GM12878 (cell line): ENCODE measurements at regions of chr20 and their contacts with region 1.

Region 1: DNA sequence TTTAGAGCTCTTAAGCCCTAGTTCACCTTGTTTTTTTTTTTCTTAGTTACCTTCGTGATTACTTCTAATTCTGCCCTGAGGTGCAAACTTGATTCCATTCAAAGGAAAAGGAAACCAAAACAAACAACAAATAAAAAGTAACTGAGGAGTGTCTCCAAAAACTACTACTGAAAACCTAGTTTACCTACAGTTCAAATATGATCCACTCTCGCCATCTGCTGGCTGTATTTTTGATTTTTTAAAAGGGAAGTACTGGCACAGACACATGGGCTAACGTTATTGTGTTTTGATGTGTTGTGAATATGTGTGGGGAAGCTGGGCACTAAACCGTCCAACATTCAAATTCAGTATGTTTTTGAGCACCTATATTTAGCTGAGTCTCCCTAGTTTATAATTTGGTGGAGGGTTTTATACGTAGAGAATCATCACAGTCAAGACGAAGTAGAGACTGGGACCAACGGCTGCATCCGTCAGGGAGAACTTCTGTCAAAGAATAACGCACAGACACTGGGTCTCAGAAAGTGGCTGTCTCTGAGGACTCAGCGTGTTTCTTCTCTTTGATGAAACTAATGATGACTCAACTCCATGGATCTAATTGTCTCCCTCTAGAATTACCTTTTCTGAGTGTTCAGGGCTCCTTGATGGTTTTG is 373.5 kb upstream of the BTBD3 start:
- DNase-seq: peak; percentile 40
- ATAC-seq: peak; percentile 97
- H3K4me3 ChIP-seq: no peak overlapping the region
- H3K27ac ChIP-seq: no peak overlapping the region
- H3K4me1 ChIP-seq: no peaks in the 10 kb centered on the region
- H3K27me3 ChIP-seq: no peaks in the 10 kb centered on the region
- CTCF ChIP-seq: peak; percentile 33 to 76 (median 39); a peak in 4 of 6 replicates
- EP300 ChIP-seq: no peak
- POLR2A ChIP-seq: no peak
- RAD21 ChIP-seq: peak; percentile 86

Region 2: DNA sequence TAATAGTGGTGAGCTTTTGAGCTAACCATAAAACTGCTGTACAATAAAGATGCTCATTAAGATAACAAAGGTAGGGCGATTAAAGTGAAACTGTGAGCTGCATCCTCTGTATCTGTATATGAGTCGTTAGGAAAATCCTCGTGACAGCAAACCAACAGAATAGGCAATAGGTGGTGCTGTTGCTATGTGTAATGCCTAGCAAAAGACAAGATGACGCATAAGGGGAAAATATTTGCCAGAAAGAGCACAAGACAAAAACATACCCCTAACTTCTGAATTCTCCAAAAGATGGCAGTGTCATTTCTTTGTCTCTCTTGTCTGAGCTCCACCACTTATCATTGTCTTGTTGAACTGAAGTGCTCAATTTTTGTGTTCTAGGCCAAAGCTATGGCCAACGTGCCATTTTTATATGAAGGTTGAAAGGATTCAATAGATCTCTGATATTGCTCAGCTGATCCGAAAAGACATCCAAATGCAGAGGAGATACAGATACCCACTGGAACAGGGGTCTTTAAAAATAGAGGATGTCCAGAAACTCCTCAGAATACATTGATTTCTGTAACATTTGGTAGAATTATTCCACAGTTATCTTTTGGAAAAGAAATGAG is 1565.7 kb before region 1 on chr20:
- CTCF ChIA-PET with region 1: interaction called, 6 read pairs
- POLR2A ChIA-PET with region 1: no interaction called
- RAD21 ChIA-PET with region 1: no interaction called
- SMC1A ChIA-PET with region 1: interaction called, 3 read pairs
- in situ Hi-C with region 1: loop called (anchors 25 kb)
- intact Hi-C with region 1: loop called (anchors 10 kb)
- DNase-seq: peak; percentile 41
- ATAC-seq: peak; percentile 97
- H3K4me3 ChIP-seq: no peak overlapping the region
- H3K27ac ChIP-seq: no peak overlapping the region
- H3K4me1 ChIP-seq: no peaks in the 10 kb centered on the region
- H3K27me3 ChIP-seq: no peaks in the 10 kb centered on the region; a peak in 1 of 4 replicates
- CTCF ChIP-seq: peak; percentile 61 to 94 (median 79)
- EP300 ChIP-seq: no peak
- POLR2A ChIP-seq: no peak
- RAD21 ChIP-seq: peak; percentile 96

Region 3: GRCh38 chr20:10558635-10559187 is 985.4 kb before region 1 on chr20:
- CTCF ChIA-PET with region 1: interaction called, 18 read pairs
- POLR2A ChIA-PET with region 1: no interaction called
- RAD21 ChIA-PET with region 1: interaction called, 15 read pairs
- SMC1A ChIA-PET with region 1: interaction called, 16 read pairs
- in situ Hi-C with region 1: loop called (anchors 5 kb)
- intact Hi-C with region 1: loop called (anchors 2 kb)
- DNase-seq: peak; percentile 84
- ATAC-seq: peak; percentile 98
- H3K4me3 ChIP-seq: no peak overlapping the region
- H3K27ac ChIP-seq: peak overlapping the region; percentile 59
- H3K4me1 ChIP-seq: peaks cover 11% of the 10 kb centered on the region; the same call in 1 of the 2 replicates
- H3K27me3 ChIP-seq: no peaks in the 10 kb centered on the region
- CTCF ChIP-seq: no peak
- EP300 ChIP-seq: peak; percentile 95 to 96; a peak in 3 of 4 replicates
- POLR2A ChIP-seq: no peak
- RAD21 ChIP-seq: no peak

Region 4: GRCh38 chr20:11204926-11205768 is 339.0 kb before region 1 on chr20:
- CTCF ChIA-PET with region 1: interaction called, 3 read pairs
- POLR2A ChIA-PET with region 1: no interaction called
- RAD21 ChIA-PET with region 1: interaction called, 3 read pairs
- SMC1A ChIA-PET with region 1: interaction called, 7 read pairs
- in situ Hi-C with region 1: no loop called
- intact Hi-C with region 1: loop called (anchors 1 kb)
- DNase-seq: peak; percentile 50
- ATAC-seq: peak; percentile 99
- H3K4me3 ChIP-seq: no peak overlapping the region
- H3K27ac ChIP-seq: no peak overlapping the region
- H3K4me1 ChIP-seq: no peaks in the 10 kb centered on the region
- H3K27me3 ChIP-seq: no peaks in the 10 kb centered on the region; a peak in 1 of 4 replicates
- CTCF ChIP-seq: peak; percentile 80 to 89 (median 84)
- EP300 ChIP-seq: no peak
- POLR2A ChIP-seq: no peak
- RAD21 ChIP-seq: peak; percentile 81

Region 5: GRCh38 chr20:11296951-11297350 is 247.2 kb before region 1 on chr20:
- CTCF ChIA-PET with region 1: interaction called, 10 read pairs
- POLR2A ChIA-PET with region 1: no interaction called
- RAD21 ChIA-PET with region 1: interaction called, 5 read pairs
- SMC1A ChIA-PET with region 1: interaction called, 5 read pairs
- in situ Hi-C with region 1: no loop called
- intact Hi-C with region 1: no loop called
- DNase-seq: no peak
- ATAC-seq: no peak
- H3K4me3 ChIP-seq: no peak overlapping the region
- H3K27ac ChIP-seq: no peak overlapping the region
- H3K4me1 ChIP-seq: no peaks in the 10 kb centered on the region
- H3K27me3 ChIP-seq: no peaks in the 10 kb centered on the region
- CTCF ChIP-seq: no peak
- EP300 ChIP-seq: no peak
- POLR2A ChIP-seq: no peak
- RAD21 ChIP-seq: no peak

Region 6: GRCh38 chr20:11492386-11492785 is 51.8 kb before region 1 on chr20:
- CTCF ChIA-PET with region 1: interaction called, 11 read pairs
- POLR2A ChIA-PET with region 1: no interaction called
- RAD21 ChIA-PET with region 1: no interaction called
- SMC1A ChIA-PET with region 1: interaction called, 5 read pairs
- in situ Hi-C with region 1: no loop called
- intact Hi-C with region 1: no loop called
- DNase-seq: no peak
- ATAC-seq: no peak
- H3K4me3 ChIP-seq: no peak overlapping the region
- H3K27ac ChIP-seq: no peak overlapping the region
- H3K4me1 ChIP-seq: no peaks in the 10 kb centered on the region
- H3K27me3 ChIP-seq: no peaks in the 10 kb centered on the region
- CTCF ChIP-seq: no peak
- EP300 ChIP-seq: no peak
- POLR2A ChIP-seq: no peak
- RAD21 ChIP-seq: no peak

Region 7: DNA sequence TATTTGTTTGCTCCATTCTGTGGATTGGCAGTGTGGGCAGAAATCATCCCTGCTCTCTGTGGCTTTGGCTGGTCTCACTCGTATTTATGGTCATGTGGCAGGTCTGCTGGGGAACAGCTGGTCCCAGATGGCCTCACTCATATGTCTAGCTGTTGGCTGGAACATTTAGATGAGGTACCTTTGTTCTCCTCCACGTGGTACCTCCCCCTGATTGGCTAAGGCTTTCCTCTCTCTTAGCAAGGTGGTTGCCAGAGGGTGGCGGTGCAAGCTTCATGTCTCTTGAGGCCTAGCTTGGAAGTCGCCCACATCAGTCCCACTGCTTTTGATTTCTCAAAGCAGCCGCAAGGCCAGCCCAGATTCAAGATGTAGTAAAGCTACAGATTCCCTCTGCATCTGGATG is 25.0 kb after region 1 on chr20:
- CTCF ChIA-PET with region 1: no interaction called
- POLR2A ChIA-PET with region 1: no interaction called
- RAD21 ChIA-PET with region 1: no interaction called
- SMC1A ChIA-PET with region 1: no interaction called
- in situ Hi-C with region 1: no loop called
- intact Hi-C with region 1: no loop called
- DNase-seq: no peak
- ATAC-seq: no peak; the same call in 2 of the 3 replicates
- H3K4me3 ChIP-seq: no peak overlapping the region
- H3K27ac ChIP-seq: no peak overlapping the region
- H3K4me1 ChIP-seq: no peaks in the 10 kb centered on the region
- H3K27me3 ChIP-seq: no peaks in the 10 kb centered on the region
- CTCF ChIP-seq: no peak
- EP300 ChIP-seq: no peak
- POLR2A ChIP-seq: no peak
- RAD21 ChIP-seq: no peak

Region 8: DNA sequence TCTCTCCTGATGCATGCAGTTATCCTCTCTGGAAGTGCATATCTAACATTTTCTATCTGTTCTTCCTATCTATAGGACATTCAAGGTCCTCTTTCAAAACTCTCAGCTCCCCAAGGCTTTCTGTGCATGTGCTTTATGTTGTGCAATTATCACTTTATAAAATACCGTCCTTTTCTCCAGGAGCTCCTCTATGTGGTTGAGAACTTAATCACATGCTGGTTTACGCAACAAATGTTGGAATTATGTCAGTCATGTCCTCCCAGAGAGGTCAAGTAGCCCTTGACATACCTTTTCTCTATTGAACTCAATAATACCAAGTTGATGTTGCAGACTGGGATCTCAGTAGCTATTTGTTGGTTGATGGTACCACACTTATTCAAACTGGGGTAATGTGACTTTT is 762.0 kb after region 1 on chr20:
- CTCF ChIA-PET with region 1: no interaction called
- POLR2A ChIA-PET with region 1: no interaction called
- RAD21 ChIA-PET with region 1: no interaction called
- SMC1A ChIA-PET with region 1: no interaction called
- in situ Hi-C with region 1: no loop called
- intact Hi-C with region 1: no loop called
- DNase-seq: no peak
- ATAC-seq: no peak
- H3K4me3 ChIP-seq: no peak overlapping the region
- H3K27ac ChIP-seq: no peak overlapping the region
- H3K4me1 ChIP-seq: no peaks in the 10 kb centered on the region
- H3K27me3 ChIP-seq: no peaks in the 10 kb centered on the region
- CTCF ChIP-seq: no peak
- EP300 ChIP-seq: no peak
- POLR2A ChIP-seq: no peak
- RAD21 ChIP-seq: no peak